Activated naive CD4-positive, alpha-beta T cell treated with anti-CD3 and anti-CD28 coated beads for 36 hours (primary cell): ENCODE measurements at regions of chr17 and their contacts with region 1.

Region 1: DNA sequence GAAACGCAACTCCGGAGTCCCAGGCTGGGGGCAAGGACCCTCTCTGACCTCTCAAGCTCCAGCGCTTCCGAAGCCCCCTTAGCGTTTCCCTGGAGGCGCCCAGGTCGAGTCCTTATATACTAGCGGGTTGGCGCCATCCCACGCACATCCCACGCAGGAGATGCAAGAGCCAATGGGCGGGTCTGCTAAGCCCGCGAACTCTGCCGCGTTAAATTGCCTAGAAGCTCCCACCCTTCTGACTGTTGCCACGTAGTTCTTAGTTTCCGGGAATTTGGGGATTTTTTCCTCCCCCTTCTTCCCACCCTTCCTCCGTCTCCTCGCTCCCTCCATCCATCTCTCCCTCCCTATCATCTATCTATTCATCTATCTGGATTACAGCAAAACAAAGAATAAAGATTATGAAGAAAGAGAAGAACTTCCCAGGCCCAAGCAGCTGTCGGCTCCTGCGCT is at the start of gene SLFN11:
- DNase-seq: peak; percentile 93
- H3K4me3 Mint-ChIP-seq: peak within 1 kb of the TSS; percentile 96
- H3K27ac Mint-ChIP-seq: peak within 1 kb of the TSS; percentile 99
- H3K4me1 Mint-ChIP-seq: peaks cover 52% of the 10 kb centered on the region
- H3K27me3 Mint-ChIP-seq: no peaks in the 10 kb centered on the region
- total RNA-seq, gene SLFN11: 46.4 to 49.6 TPM

Region 2: DNA sequence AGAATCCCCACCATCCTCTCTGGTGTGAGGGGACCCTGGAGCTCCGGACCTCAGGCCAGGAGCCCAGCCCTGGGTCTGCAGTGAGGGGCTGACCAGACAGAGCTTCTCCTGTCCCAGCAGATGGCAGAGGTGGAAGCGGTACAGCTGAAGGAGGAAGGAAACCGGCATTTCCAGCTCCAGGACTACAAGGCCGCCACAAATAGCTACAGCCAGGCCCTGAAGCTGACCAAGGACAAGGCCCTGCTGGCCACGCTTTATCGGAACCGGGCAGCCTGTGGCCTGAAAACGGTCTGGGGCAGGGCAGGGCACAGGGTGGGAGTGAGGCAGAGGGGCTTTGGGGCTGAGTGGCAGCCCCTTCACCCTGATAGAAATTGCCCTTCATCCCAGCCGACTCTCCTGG is 225.4 kb before region 1 on chr17:
- CTCF ChIA-PET with region 1: no interaction called
- intact Hi-C with region 1: no loop called
- DNase-seq: no peak
- H3K4me3 Mint-ChIP-seq: no peak overlapping the region
- H3K27ac Mint-ChIP-seq: no peak overlapping the region
- H3K4me1 Mint-ChIP-seq: peaks cover 6% of the 10 kb centered on the region
- H3K27me3 Mint-ChIP-seq: no peaks in the 10 kb centered on the region

Region 3: DNA sequence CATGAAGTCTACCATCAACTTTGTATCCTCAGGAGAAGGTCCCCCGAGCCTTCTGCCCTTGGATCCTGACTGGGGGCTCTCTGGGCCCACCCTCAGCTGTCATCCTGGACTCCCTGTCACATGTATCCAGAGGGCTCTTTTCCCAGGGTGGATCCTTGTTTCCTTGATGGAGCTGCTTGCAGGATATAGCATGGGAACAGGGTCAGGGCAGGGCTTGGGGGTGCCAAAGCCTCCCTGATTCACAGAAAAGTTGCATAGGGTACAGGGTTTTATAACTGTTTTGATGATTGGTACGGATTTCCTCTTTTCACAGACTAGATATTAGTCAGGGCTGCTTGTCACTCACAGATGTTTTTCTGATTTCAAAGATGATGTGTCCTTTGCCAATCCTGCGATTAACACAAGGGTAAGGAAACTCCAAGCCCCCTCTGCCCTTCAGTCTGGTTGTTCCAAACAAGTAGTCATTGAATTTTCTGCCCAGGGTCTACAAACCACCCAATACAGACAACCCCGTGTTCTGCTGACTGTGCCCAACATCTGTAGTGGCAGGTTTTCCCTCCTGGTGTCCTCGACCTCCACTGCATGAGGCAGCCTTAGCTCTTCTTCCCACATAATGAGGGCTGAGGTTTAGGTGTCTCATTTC is 158.8 kb before region 1 on chr17:
- CTCF ChIA-PET with region 1: no interaction called
- intact Hi-C with region 1: loop called (anchors 10 kb)
- DNase-seq: peak; percentile 48
- H3K4me3 Mint-ChIP-seq: peak overlapping the region; percentile 45
- H3K27ac Mint-ChIP-seq: peak overlapping the region; percentile 88
- H3K4me1 Mint-ChIP-seq: peaks cover 84% of the 10 kb centered on the region
- H3K27me3 Mint-ChIP-seq: no peaks in the 10 kb centered on the region

Region 4: DNA sequence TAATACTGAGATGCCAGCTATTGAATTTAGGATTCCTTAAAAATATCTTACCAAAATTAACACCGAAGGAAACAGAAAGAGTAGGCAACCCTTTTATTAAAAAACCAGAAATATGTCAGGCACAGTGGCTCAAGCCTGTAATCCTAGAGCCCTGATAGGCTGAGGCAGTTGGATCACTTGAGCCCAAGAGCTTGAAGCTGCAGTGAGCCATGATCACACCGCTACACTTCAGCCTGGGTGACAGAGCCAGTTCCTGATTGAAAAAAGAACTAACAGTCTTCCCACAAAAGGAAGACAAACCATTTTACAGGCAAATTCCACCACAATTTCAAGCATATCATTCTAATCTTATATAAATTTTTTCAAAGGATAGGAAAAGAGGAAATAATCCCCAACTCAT is 43.1 kb after region 1 on chr17:
- CTCF ChIA-PET with region 1: no interaction called
- intact Hi-C with region 1: no loop called
- DNase-seq: no peak
- H3K4me3 Mint-ChIP-seq: no peak overlapping the region
- H3K27ac Mint-ChIP-seq: no peak overlapping the region
- H3K4me1 Mint-ChIP-seq: peaks cover 2% of the 10 kb centered on the region
- H3K27me3 Mint-ChIP-seq: no peaks in the 10 kb centered on the region

Region 5: DNA sequence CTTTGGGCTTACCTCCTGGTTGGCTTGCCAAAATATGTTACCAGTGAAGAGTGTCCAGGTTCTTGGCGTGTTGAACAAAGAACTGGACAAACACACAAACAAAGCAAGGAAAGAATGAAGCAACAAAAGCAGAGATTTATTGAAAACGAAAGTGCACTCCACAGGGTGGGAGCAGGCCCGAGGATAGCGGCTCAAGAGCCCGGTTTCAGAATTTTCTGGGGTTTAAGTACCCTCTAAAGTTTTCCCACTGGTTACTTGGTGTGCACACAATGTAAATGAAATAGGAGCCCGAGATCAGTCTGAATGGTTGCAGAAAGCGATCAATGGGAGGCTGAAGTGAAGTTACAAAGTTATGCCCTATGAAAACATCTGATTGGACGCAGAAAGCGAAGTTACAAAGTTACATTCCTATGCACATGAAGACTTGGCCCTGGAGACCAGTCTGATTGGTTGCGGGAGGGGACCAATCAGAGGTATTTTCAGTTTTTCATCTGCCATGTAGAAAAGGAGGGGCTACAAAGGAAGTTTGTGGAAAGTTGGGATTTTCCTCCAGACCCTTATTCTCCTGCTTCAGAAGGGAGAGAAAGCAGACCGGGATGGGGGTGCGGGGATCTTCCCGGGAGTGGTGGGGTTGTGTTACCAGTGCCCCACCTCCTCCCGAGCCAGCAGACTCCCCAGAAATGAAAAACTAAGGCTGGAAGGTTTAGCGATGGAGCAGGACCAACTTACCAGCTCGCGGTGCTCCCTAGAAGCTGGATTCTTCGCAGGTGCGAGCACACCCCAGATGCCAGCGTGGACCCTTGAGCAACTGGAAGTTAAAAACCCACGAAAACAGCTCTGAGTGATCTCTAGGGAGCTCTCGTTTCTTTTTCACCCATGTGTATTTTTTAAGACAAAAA is 58.9 kb after region 1 on chr17 and contains the start of gene SLFN12:
- CTCF ChIA-PET with region 1: no interaction called
- intact Hi-C with region 1: loop called (anchors 1 kb)
- DNase-seq: peak; percentile 66
- H3K4me3 Mint-ChIP-seq: peak within 1 kb of the TSS; percentile 87
- H3K27ac Mint-ChIP-seq: peak within 1 kb of the TSS; percentile 88
- H3K4me1 Mint-ChIP-seq: peaks cover 41% of the 10 kb centered on the region
- H3K27me3 Mint-ChIP-seq: no peaks in the 10 kb centered on the region
- total RNA-seq, gene SLFN12: 5.3 to 5.6 TPM

Region 6: GRCh38 chr17:35448214-35448898 is 74.8 kb after region 1 on chr17 and contains the start of gene SLFN13:
- CTCF ChIA-PET with region 1: interaction called, 3 read pairs
- intact Hi-C with region 1: loop called (anchors 1 kb)
- DNase-seq: peak; percentile 98
- H3K4me3 Mint-ChIP-seq: peak within 1 kb of the TSS; percentile 52
- H3K27ac Mint-ChIP-seq: peak within 1 kb of the TSS; percentile 13
- H3K4me1 Mint-ChIP-seq: peaks cover 12% of the 10 kb centered on the region
- H3K27me3 Mint-ChIP-seq: no peaks in the 10 kb centered on the region
- total RNA-seq, gene SLFN13: 28.6 to 30.1 TPM

Region 7: DNA sequence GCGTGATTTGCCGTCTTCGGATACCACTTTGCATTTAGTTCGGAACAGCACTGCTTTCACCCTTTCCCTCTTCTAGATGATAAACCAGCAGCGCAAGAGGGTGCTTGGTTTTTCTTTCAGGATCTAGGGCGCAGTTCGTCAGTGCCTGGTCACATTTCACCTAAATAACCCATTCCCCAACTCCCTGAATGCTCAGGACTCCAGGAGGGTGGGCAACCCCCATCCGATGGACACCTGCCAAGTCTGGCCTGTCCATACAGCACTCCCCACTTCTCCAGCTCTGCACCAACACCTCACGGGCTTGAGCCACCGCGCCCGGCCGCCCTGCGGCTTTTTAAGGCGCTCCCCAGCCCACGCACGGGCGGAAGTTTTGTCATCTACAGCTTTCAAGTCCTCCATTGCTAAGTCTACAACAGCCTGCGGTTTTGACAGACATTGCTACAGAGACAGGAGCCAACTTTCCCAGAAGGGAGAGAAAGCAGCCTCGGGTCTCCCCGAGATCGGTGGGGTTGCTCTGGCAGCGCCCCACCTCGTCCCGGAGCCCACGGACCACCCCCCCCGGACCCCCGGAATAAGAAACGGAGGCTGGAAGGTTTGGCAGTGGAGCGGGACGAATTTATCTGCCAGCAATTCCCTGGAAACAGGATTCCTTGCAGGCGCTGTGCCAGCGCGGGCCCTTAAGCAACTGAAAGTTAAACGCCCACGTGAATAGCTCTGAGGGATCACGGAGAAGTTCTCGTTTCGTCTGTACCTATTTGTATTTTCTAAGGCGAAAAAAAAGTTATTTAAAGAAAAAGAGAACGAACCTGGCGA is 113.6 kb after region 1 on chr17:
- CTCF ChIA-PET with region 1: interaction called, 7 read pairs
- intact Hi-C with region 1: loop called (anchors 2 kb)
- DNase-seq: peak; percentile 90
- H3K4me3 Mint-ChIP-seq: peak overlapping the region; percentile 82
- H3K27ac Mint-ChIP-seq: peak overlapping the region; percentile 83
- H3K4me1 Mint-ChIP-seq: peaks cover 27% of the 10 kb centered on the region
- H3K27me3 Mint-ChIP-seq: no peaks in the 10 kb centered on the region

Region 8: DNA sequence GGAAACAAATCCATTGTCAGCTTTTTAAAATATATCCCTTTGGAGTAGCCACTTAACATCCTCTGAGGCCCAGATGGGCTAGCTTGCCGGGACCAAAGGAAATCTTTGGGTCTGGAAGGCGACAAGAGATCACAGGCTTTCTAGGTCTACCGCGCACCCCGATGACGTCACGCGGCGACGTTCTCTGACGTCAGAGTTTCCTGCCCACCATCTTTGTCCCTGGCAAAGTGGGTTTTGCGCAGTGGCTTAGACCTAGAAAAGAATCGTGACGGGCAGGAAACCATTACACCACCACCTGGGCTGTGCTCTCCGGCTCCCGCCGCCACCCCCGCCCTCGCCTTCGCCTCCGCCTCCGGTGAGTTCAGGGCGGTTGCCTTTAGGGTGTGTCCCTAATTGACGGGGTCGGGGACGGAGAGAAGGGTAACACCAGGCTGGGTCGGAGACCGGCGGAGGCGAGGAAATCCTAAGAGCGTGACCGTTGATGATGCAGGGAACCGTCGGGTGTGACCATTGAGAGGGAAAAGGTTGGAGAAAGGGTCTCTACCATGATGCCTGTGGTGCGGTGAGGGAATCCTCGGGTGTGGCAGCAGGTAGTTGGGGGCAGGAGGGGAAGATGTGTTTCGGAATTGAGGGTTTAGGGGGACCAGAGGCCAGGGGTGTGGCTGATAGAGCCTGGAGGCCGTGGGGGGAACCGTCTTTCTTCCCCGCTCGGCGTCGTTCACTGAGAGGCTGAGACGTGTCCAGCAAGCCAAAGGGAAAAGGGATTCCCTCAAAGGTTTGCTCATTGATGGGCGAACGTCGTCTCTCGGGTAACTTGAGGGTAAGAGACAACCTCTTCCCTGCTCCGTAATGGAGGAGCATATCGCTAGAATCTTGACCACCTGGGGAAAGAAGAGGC is 213.8 kb after region 1 on chr17 and contains the start of gene AP2B1:
- CTCF ChIA-PET with region 1: no interaction called
- intact Hi-C with region 1: loop called (anchors 1 kb)
- DNase-seq: peak; percentile 97
- H3K4me3 Mint-ChIP-seq: peak within 1 kb of the TSS; percentile 97
- H3K27ac Mint-ChIP-seq: peak within 1 kb of the TSS; percentile 97
- H3K4me1 Mint-ChIP-seq: peaks cover 29% of the 10 kb centered on the region
- H3K27me3 Mint-ChIP-seq: no peaks in the 10 kb centered on the region
- total RNA-seq, gene AP2B1: 158 to 172 TPM